ENCODE measurements at regions of chr15 and their contacts with region 1.

Region 1: DNA sequence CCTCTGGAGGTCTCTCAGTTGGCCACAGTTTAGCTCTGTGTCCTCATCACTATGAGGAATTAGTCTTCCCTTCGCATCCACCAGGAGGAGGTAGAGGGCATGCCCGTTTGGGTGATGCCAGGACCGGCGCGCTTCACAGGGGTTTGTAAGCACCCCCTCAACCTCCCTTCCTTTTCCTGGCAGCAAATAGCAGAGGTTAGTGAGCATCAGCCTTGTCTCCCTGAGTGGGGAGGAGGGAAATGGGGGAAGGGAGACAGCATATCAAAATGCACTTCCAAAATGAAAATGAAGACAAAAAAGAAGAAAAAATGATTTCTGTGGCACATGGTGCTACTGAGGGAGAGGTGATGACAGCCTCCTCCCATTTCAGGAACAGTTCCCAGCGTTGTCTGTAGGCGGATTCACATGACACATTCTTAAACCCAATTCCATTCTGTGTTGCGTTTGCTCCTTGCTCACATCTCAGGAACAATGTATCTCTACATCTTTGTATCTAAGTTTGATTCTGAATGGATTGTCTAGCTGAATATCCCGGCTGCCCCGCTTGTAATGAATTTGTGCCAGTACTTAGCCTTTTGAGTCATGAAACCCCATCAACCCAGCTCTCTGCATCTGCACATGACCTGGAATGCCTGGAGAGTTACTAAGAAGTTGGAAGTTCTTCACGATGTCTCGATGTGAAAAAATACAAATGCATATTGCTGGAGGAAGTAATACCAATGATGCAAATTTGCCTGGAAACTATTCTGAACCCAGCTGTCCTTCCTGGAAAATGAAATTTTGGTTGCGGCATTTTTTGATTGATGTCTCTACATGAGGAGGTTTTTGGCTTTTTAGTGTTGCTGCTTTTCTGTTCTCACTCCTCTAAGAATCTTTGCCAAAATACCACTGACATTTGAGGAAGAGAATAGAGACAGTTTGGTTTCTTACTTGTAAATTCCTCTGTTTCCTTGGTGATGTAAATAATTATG is 45.2 kb downstream of the TYRO3 start:
- DNase-seq: peak; percentile 79
- ATAC-seq: peak; percentile 98
- H3K4me3 Mint-ChIP-seq: peak overlapping the region; percentile 46
- H3K27ac Mint-ChIP-seq: no peak overlapping the region; the same call in 1 of the 2 replicates
- H3K4me1 Mint-ChIP-seq: peaks cover 7% of the 10 kb centered on the region
- H3K27me3 Mint-ChIP-seq: no peaks in the 10 kb centered on the region; the same call in 1 of the 2 replicates
- CTCF ChIP-seq: peak; percentile 63

Region 2: DNA sequence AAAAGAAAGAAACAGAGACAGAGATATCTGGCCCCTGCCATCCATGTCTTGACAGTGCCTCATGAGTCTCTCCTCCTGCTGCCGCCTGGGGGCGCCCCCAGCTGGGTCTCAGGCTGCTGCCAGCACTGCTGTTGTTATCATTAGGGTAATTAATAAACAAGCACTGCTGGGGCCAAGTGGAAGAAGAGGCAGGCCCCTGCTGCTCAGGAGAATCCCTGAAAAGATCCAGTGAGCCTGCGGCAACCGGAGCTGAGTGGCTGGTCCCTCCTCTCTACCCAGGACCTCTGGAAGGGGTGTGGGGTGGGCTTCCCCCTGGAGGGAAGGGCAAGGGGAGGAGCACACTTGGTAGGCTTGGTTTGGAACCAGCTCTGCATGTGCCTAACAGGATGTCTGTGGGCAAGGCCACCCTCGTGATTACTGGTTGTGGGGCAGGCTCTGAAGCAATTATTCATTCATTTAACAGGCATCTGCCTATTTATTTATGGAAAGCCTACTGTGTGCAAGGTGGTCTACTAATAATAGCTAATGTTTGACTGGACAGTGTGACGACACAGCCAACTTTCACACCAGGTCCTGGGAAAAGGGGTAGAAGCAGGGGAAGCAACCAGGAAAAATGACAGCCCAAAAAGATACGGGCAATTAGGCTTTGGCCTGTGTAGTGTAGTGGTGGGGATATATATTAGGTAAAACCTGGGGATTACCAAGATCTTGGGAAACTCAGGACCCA is 46.4 kb before region 1 on chr15:
- CTCF ChIA-PET with region 1: interaction called, 51 read pairs
- POLR2A ChIA-PET with region 1: interaction called, 5 read pairs
- DNase-seq: peak; percentile 76
- ATAC-seq: peak; percentile 75
- H3K4me3 Mint-ChIP-seq: peak overlapping the region; percentile 80
- H3K27ac Mint-ChIP-seq: peak overlapping the region; percentile 81
- H3K4me1 Mint-ChIP-seq: peaks cover 46% of the 10 kb centered on the region
- H3K27me3 Mint-ChIP-seq: no peaks in the 10 kb centered on the region; the same call in 1 of the 2 replicates
- CTCF ChIP-seq: peak; percentile 80

Region 3: DNA sequence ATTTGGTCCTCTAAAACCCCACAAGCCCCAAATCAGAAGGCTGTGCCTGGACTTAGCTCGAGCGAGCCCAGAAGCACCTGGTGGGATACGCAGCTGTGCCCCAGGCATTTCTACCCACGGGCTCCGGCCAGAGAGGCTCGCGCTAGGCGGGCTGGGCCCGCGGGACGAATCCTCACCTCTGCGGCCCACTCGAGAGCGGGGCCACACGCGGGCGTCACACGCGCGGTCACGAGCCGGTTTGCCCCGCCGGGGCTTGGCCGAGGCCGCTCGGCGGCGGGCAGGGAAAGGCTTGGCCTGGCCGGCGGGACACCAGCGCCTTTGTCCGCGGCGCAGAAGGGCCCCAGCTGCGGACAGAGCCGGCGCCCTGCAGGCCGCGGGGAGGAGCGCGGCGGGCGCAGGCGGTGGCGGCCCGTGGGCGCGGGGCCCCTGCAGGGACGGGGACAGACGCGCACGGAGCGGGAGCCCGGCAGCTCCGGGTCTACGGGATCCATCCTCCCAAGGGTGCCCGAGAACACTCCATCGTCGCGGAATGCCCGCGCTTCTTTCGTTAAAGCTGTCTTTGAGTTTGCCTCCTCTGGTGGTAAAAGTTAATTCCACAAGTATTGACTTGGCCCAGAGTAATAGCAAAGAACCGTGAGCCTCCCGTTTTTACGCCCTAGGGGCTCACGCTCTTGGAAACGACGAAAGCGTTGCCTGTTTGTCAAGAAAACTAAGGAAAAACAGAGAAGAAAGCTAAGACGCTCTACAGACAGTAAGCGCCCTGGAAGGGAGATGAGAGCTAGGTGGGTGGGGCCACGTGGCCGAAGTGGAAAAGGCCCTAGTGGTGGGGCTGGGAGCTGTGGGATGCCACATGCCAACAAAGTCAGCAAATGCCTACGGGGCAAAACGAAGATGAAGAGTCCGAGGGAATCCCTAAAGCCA is 18.8 kb before region 1 on chr15:
- CTCF ChIA-PET with region 1: interaction called, 25 read pairs
- POLR2A ChIA-PET with region 1: interaction called, 6 read pairs
- DNase-seq: peak; percentile 35
- ATAC-seq: peak; percentile 67
- H3K4me3 Mint-ChIP-seq: peak overlapping the region; percentile 68
- H3K27ac Mint-ChIP-seq: no peak overlapping the region
- H3K4me1 Mint-ChIP-seq: peaks cover 16% of the 10 kb centered on the region
- H3K27me3 Mint-ChIP-seq: peaks cover 16% of the 10 kb centered on the region
- CTCF ChIP-seq: no peak

Region 4: GRCh38 chr15:41629463-41629862 is 25.2 kb after region 1 on chr15:
- CTCF ChIA-PET with region 1: interaction called, 10 read pairs
- POLR2A ChIA-PET with region 1: no interaction called
- DNase-seq: no peak
- ATAC-seq: peak; percentile 18; the same call in 1 of the 2 replicates
- H3K4me3 Mint-ChIP-seq: no peak overlapping the region
- H3K27ac Mint-ChIP-seq: no peak overlapping the region
- H3K4me1 Mint-ChIP-seq: peaks cover 40% of the 10 kb centered on the region
- H3K27me3 Mint-ChIP-seq: no peaks in the 10 kb centered on the region
- CTCF ChIP-seq: no peak

Region 5: GRCh38 chr15:41811432-41812195 is 207.4 kb after region 1 on chr15:
- CTCF ChIA-PET with region 1: interaction called, 22 read pairs
- POLR2A ChIA-PET with region 1: no interaction called
- DNase-seq: peak; percentile 89
- ATAC-seq: peak; percentile 88
- H3K4me3 Mint-ChIP-seq: no peak overlapping the region
- H3K27ac Mint-ChIP-seq: no peak overlapping the region
- H3K4me1 Mint-ChIP-seq: peaks cover 6% of the 10 kb centered on the region
- H3K27me3 Mint-ChIP-seq: no peaks in the 10 kb centered on the region
- CTCF ChIP-seq: peak; percentile 37; the same call in 1 of the 2 replicates